Activated B cell treated with CpG ODN at 0.5 μM for 24 hours (primary cell): ENCODE measurements at regions of chr15 and their contacts with region 1.

Region 1: GRCh38 chr15:64809649-64810496 is 15.6 kb downstream of the PIF1 start:
- DNase-seq: peak; percentile 61
- ATAC-seq: peak; percentile 43
- H3K4me3 Mint-ChIP-seq: no peak overlapping the region
- H3K27ac Mint-ChIP-seq: no peak overlapping the region
- H3K4me1 Mint-ChIP-seq: peaks cover 25% of the 10 kb centered on the region
- H3K27me3 Mint-ChIP-seq: no peaks in the 10 kb centered on the region
- CTCF ChIP-seq: peak; percentile 90

Region 2: DNA sequence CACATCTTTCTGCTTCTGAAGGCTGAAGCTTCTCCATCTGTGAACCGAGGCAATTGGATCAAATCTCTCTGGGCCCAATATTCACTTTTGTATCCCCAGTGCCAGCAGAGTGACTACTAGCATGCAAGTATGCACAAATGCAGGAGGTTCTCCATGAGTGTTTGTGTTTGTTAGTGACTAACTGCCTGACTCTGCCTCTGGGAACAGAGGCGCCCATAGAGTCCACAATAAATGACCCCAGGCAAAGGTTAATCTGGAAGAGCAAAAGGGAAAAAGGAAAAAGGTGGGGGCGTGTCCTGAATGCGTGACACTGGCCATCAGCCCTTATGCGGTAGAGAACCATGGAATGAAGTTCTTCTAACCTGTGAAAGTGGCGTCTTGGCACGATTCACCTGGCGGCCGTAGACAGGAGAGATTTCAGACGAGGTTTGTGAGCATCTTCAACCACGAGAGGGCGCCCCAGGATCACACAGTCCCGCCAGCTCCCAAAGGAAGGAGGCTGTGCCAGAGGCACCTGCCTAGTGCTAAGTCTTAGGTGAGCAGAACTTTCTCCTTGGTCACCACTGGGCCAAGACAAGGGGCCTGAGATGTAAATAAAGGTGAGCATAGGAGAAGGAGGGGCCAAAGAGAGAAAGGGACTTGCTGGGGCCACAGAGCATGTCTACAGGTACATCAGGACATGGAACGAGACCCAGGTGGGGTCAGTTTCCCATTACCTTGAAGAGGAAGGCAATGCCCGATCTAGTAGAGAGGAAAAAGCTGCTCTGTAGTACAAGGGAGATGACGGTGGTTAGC is 78.7 kb before region 1 on chr15:
- CTCF ChIA-PET with region 1: interaction called, 85 read pairs
- POLR2A ChIA-PET with region 1: interaction called, 4 read pairs
- intact Hi-C with region 1: loop called (anchors 1 kb)
- DNase-seq: peak; percentile 77
- ATAC-seq: peak; percentile 74
- H3K4me3 Mint-ChIP-seq: no peak overlapping the region
- H3K27ac Mint-ChIP-seq: no peak overlapping the region
- H3K4me1 Mint-ChIP-seq: peaks cover 7% of the 10 kb centered on the region
- H3K27me3 Mint-ChIP-seq: no peaks in the 10 kb centered on the region
- CTCF ChIP-seq: peak; percentile 61

Region 3: GRCh38 chr15:64774629-64775493 is 35.0 kb before region 1 on chr15:
- CTCF ChIA-PET with region 1: no interaction called
- POLR2A ChIA-PET with region 1: no interaction called
- intact Hi-C with region 1: loop called (anchors 5 kb)
- DNase-seq: peak; percentile 35
- ATAC-seq: peak; percentile 50
- H3K4me3 Mint-ChIP-seq: peak overlapping the region; percentile 66
- H3K27ac Mint-ChIP-seq: no peak overlapping the region
- H3K4me1 Mint-ChIP-seq: peaks cover 6% of the 10 kb centered on the region
- H3K27me3 Mint-ChIP-seq: peaks cover 13% of the 10 kb centered on the region
- CTCF ChIP-seq: no peak

Region 4: DNA sequence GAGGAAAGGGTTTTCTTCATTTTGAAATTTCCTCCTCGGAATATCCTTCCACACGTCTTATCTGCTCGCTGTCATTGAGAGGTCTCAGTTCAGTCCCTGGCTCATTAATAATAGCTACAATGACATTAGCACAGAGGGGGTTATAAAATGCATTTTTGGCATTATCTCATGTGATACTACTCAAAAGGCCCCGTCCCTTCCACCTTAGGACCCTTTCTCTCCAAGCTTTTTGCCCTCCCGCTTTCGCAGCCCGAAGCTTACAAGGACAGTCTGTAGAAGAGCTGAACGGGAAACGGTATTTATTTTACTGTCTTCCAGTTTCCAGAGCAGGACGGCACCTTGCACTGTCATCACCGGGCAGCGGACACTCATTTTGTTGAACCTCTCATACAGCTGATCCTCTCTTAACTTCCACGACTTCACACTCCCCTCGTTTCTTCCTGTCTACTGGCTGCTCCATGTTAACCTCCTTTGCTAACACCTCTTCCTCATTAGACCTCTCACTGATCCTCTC is 26.2 kb after region 1 on chr15:
- CTCF ChIA-PET with region 1: interaction called, 20 read pairs
- POLR2A ChIA-PET with region 1: interaction called, 4 read pairs
- intact Hi-C with region 1: loop called (anchors 1 kb)
- DNase-seq: no peak
- ATAC-seq: no peak
- H3K4me3 Mint-ChIP-seq: peak overlapping the region; percentile 60
- H3K27ac Mint-ChIP-seq: peak overlapping the region; percentile 50
- H3K4me1 Mint-ChIP-seq: peaks cover 23% of the 10 kb centered on the region
- H3K27me3 Mint-ChIP-seq: no peaks in the 10 kb centered on the region
- CTCF ChIP-seq: no peak

Region 5: DNA sequence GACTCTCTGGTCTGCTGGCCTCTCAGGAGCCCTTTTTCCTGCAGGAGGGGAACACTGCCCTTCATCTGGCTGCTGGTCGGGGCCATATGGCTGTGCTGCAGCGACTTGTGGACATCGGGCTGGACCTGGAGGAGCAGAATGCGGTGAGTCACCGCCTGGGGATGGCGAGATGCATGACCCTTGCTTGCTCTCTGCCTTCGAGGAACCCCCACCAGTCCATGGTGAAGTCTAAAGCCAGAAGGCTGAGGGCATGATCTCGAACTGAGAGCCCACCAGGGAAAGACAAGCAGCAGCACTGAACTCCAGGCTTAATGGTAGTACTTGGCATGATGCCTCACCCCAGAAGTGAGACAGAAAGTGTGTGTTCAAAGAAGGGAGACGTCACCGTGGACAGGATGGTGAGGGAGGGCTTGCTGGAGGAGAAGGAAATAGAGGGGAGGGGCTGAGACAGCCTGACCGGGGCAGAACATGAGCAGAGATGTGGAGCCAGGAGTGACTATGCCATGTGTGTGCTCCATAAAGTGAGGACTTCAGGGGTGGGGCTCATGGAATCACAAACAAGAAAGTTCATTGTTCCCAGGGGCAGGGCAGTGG is 121.0 kb after region 1 on chr15:
- CTCF ChIA-PET with region 1: no interaction called
- POLR2A ChIA-PET with region 1: no interaction called
- intact Hi-C with region 1: no loop called
- DNase-seq: no peak
- ATAC-seq: no peak
- H3K4me3 Mint-ChIP-seq: no peak overlapping the region
- H3K27ac Mint-ChIP-seq: no peak overlapping the region
- H3K4me1 Mint-ChIP-seq: peaks cover 12% of the 10 kb centered on the region
- H3K27me3 Mint-ChIP-seq: no peaks in the 10 kb centered on the region
- CTCF ChIP-seq: no peak

Region 6: GRCh38 chr15:64989416-64990167 is 179.7 kb after region 1 on chr15 and contains the start of gene SPG21:
- CTCF ChIA-PET with region 1: no interaction called
- POLR2A ChIA-PET with region 1: no interaction called
- intact Hi-C with region 1: loop called (anchors 1 kb)
- DNase-seq: peak; percentile 97
- ATAC-seq: peak; percentile 95
- H3K4me3 Mint-ChIP-seq: peak within 1 kb of the TSS; percentile 91
- H3K27ac Mint-ChIP-seq: peak within 1 kb of the TSS; percentile 86
- H3K4me1 Mint-ChIP-seq: peaks cover 48% of the 10 kb centered on the region
- H3K27me3 Mint-ChIP-seq: no peaks in the 10 kb centered on the region
- CTCF ChIP-seq: no peak
- total RNA-seq, gene SPG21: 74.7 and 75.7 TPM in 2 replicates

Region 7: DNA sequence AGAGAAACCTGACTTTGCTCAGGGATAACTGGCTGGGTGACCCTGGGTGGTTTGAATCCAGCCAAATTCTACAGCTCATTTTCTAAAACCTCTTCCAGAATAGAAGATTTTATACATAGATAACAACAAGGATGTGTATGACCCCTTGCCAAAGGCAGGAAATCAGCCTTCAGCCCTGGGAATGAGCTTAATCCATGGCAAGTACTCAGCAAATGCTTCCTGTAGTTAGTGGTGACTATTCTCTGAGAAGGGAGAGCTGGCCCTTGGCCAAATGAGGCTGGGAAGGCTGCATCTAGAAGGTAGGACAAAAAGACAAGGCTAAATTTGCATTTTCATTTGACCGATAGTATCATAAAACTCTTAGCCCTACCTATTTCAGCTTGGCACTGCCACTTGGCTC is 715.7 kb after region 1 on chr15:
- CTCF ChIA-PET with region 1: no interaction called
- POLR2A ChIA-PET with region 1: no interaction called
- intact Hi-C with region 1: no loop called
- DNase-seq: no peak
- ATAC-seq: no peak
- H3K4me3 Mint-ChIP-seq: no peak overlapping the region
- H3K27ac Mint-ChIP-seq: no peak overlapping the region
- H3K4me1 Mint-ChIP-seq: peaks cover 5% of the 10 kb centered on the region
- H3K27me3 Mint-ChIP-seq: no peaks in the 10 kb centered on the region
- CTCF ChIP-seq: no peak